MCF 10A (cell line): ENCODE measurements at regions of chr9 and their contacts with region 1.

Region 1: DNA sequence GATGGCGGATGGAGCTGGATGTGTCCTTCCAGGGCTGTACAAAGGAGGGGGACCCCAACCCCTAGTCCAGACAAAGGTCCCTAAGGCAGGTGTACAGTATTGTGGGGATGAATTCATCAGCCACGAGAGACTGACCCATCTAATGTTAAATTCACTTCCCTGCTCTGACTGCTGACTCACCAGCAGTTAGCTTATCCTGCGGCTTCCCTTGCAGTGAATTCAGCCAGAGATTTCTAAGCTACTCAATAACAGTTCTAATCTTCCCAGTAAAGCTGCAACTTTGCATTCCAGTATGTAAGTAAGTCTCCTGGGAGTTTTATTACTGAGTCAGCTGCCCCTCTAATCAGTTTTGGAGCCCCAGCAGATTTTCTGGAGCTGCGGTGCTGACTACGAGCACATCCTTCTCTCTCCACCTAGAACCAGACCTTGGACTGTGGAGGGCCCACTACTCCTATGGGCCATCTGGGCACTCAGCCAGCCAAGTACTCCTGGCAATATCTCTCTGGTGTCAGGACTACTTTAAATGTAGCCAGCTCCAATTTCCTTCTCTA is 16.1 kb downstream of the B4GALT1 start:
- DNase-seq: peak; percentile 76
- H3K4me3 Mint-ChIP-seq: peak overlapping the region; percentile 5
- H3K27ac Mint-ChIP-seq: peak overlapping the region; percentile 76
- H3K4me1 Mint-ChIP-seq: peaks cover 74% of the 10 kb centered on the region
- H3K27me3 Mint-ChIP-seq: no peaks in the 10 kb centered on the region
- CTCF ChIP-seq: no peak

Region 2: GRCh38 chr9:33130508-33130911 is 20.6 kb before region 1 on chr9:
- CTCF ChIA-PET with region 1: interaction called, 4 read pairs
- POLR2A ChIA-PET with region 1: interaction called, 67 read pairs
- intact Hi-C with region 1: no loop called
- DNase-seq: peak; percentile 75
- H3K4me3 Mint-ChIP-seq: peak overlapping the region; percentile 22
- H3K27ac Mint-ChIP-seq: peak overlapping the region; percentile 96
- H3K4me1 Mint-ChIP-seq: peaks cover 60% of the 10 kb centered on the region
- H3K27me3 Mint-ChIP-seq: no peaks in the 10 kb centered on the region
- CTCF ChIP-seq: no peak

Region 3: DNA sequence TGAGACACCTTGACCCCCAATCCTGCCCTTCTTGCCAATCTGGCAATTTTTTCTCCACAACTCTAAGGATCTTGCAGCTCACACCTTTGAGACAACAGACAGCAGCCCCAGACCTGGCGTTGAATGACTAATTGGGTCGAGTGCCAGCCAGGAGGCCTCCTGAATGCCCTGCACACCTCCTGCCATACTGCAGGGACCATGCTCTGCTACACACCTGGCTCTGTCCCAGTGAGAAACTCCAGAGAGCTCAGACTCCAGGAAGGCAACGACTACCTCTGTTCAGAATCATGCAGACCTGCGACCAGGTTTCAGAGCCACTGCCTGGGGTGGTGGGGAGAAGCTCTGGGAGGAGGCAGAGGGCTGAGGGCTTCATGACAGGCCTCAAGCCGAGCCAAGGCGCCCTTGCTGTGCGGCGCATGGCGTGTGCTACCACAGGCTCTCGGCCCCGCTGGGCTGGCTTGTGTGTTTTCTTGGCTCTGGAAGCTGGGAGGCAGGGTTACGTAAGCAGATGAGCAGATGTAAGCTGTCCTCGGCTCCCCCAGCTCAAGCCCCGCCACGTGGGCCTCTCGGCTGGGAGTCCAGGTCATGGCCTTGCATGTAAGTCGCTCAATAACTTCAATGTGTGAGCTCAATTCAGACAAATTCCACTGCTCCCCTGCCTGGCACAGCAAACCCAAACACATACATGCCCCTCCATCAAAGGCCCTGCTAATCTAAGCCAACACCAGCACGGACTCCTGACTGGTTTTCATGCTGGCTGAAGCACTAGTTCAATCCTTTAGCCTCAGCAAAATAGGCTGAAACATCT is 11.5 kb before region 1 on chr9:
- CTCF ChIA-PET with region 1: interaction called, 4 read pairs
- POLR2A ChIA-PET with region 1: interaction called, 67 read pairs
- intact Hi-C with region 1: no loop called
- DNase-seq: peak; percentile 61
- H3K4me3 Mint-ChIP-seq: no peak overlapping the region
- H3K27ac Mint-ChIP-seq: peak overlapping the region; percentile 21
- H3K4me1 Mint-ChIP-seq: peaks cover 38% of the 10 kb centered on the region
- H3K27me3 Mint-ChIP-seq: no peaks in the 10 kb centered on the region
- CTCF ChIP-seq: no peak